A673 (cell line): ENCODE measurements at regions of chr1 and their contacts with region 1.

Region 1: GRCh38 chr1:147389532-147390524 is 147.3 kb downstream of the CHD1L start:
- DNase-seq: peak; percentile 61
- H3K4me3 ChIP-seq: no peak overlapping the region
- H3K27ac ChIP-seq: no peak overlapping the region
- H3K4me1 ChIP-seq: no peaks in the 10 kb centered on the region
- H3K27me3 ChIP-seq: no peaks in the 10 kb centered on the region
- CTCF ChIP-seq: peak; percentile 72

Region 2: GRCh38 chr1:147156638-147157037 is 233.2 kb before region 1 on chr1:
- CTCF ChIA-PET with region 1: no interaction called
- POLR2A ChIA-PET with region 1: no interaction called
- intact Hi-C with region 1: no loop called
- DNase-seq: no peak
- H3K4me3 ChIP-seq: no peak overlapping the region
- H3K27ac ChIP-seq: no peak overlapping the region
- H3K4me1 ChIP-seq: no peaks in the 10 kb centered on the region
- H3K27me3 ChIP-seq: no peaks in the 10 kb centered on the region
- CTCF ChIP-seq: 0 out of 2 replicates have a peak, but pooled peaks have one; percentile 9

Region 3: GRCh38 chr1:147273409-147274336 is 116.2 kb before region 1 on chr1:
- CTCF ChIA-PET with region 1: interaction called, 18 read pairs
- POLR2A ChIA-PET with region 1: no interaction called
- intact Hi-C with region 1: loop called (anchors 5 kb)
- DNase-seq: peak; percentile 80
- H3K4me3 ChIP-seq: no peak overlapping the region
- H3K27ac ChIP-seq: peak overlapping the region; percentile 17
- H3K4me1 ChIP-seq: peaks cover 10% of the 10 kb centered on the region
- H3K27me3 ChIP-seq: no peaks in the 10 kb centered on the region
- CTCF ChIP-seq: peak; percentile 77